Naive thymus-derived CD4-positive, alpha-beta T cell (primary cell): ENCODE measurements at regions of chr1 and their contacts with region 1.

Region 1: GRCh38 chr1:52365746-52366516 is at the start of gene CC2D1B:
- DNase-seq: peak; percentile 97 to 100 (median 99)
- ATAC-seq: peak; percentile 90
- H3K4me3 ChIP-seq: peak within 1 kb of the TSS; percentile 67
- H3K4me3 Mint-ChIP-seq: peak within 1 kb of the TSS; percentile 85 to 98 (median 94)
- H3K27ac ChIP-seq: peak within 1 kb of the TSS; percentile 95
- H3K27ac Mint-ChIP-seq: peak within 1 kb of the TSS; percentile 89 to 97 (median 94)
- H3K4me1 ChIP-seq: peaks cover 15 to 20% of the 10 kb centered on the region in 2 donors
- H3K4me1 Mint-ChIP-seq: peaks cover 26 to 65% (median 51%) of the 10 kb centered on the region in 7 donors
- H3K27me3 ChIP-seq: no peaks in the 10 kb centered on the region
- H3K27me3 Mint-ChIP-seq: no peaks in the 10 kb centered on the region
- total RNA-seq, gene CC2D1B: 44.5 to 91.2 (median 58.3) TPM

Region 2: GRCh38 chr1:51878616-51879336 is 487.2 kb before region 1 on chr1 and contains the start of gene NRDC:
- CTCF ChIA-PET with region 1: no interaction called
- POLR2A ChIA-PET with region 1: interaction called, 5 read pairs
- intact Hi-C with region 1: loop called (anchors 1 kb)
- DNase-seq: peak; percentile 95 to 100 (median 99)
- ATAC-seq: peak; percentile 95
- H3K4me3 ChIP-seq: peak within 1 kb of the TSS; percentile 87
- H3K4me3 Mint-ChIP-seq: no peak within 1 kb of the TSS
- H3K27ac ChIP-seq: peak within 1 kb of the TSS; percentile 98
- H3K27ac Mint-ChIP-seq: no peak within 1 kb of the TSS
- H3K4me1 ChIP-seq: peaks cover 16 to 26% of the 10 kb centered on the region in 2 donors
- H3K4me1 Mint-ChIP-seq: peaks cover 0 to 30% (median 17%) of the 10 kb centered on the region in 7 donors
- H3K27me3 ChIP-seq: no peaks in the 10 kb centered on the region
- H3K27me3 Mint-ChIP-seq: peaks cover 7 to 15% (median 10%) of the 10 kb centered on the region in 5 donors
- total RNA-seq, gene NRDC: 93.1 to 194 (median 122) TPM

Region 3: DNA sequence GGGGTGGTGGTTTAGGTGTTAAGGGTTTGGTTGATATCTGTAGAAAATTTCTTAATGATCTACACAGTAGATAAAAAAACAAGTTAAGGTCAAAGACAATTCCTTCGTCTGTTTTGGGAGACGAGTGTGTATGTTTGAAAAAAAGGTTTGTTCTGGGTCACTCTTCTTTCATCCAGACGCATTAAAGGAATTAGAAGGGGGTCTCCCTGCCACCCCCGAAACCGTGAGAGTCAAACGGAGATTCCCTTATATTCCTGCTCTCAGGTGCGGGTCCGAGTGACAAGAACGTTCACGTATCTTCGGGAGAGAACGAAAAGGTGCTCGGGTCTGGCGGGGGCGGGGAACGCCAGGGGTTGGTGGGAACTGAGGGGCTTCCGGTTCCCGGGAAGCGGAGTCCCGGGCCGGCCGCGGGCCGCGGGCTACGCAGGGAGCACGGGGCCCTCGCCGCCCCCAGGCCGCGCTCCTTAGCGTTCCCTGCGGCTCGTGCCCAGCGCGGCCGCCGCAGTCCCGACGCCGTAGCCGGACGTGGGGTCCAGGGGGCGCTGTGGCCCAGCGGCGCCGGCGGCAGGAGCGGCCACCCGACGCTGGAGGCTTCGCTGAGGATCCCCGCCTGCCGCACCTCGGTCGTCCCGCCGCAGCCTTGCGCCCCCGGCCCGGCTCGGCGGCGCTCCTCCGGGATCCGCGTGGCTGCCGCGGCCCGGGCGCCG is 224.3 kb before region 1 on chr1 and contains the start of gene ZFYVE9:
- CTCF ChIA-PET with region 1: no interaction called
- POLR2A ChIA-PET with region 1: no interaction called
- intact Hi-C with region 1: loop called (anchors 1 to 5 kb)
- DNase-seq: peak; percentile 52 to 80 (median 73)
- ATAC-seq: peak; percentile 93
- H3K4me3 ChIP-seq: peak within 1 kb of the TSS; percentile 65
- H3K4me3 Mint-ChIP-seq: peak within 1 kb of the TSS; percentile 79 to 96 (median 92)
- H3K27ac ChIP-seq: peak within 1 kb of the TSS; percentile 72
- H3K27ac Mint-ChIP-seq: peak within 1 kb of the TSS; percentile 64 to 95 (median 86)
- H3K4me1 ChIP-seq: peaks cover 11 to 24% of the 10 kb centered on the region in 2 donors
- H3K4me1 Mint-ChIP-seq: peaks cover 26 to 48% (median 43%) of the 10 kb centered on the region in 7 donors
- H3K27me3 ChIP-seq: no peaks in the 10 kb centered on the region
- H3K27me3 Mint-ChIP-seq: peaks cover 0 to 44% (median 0%) of the 10 kb centered on the region in 5 donors
- total RNA-seq, gene ZFYVE9: 1.8 to 13.9 (median 7.6) TPM

Region 4: GRCh38 chr1:52601991-52602855 is 236.3 kb after region 1 on chr1 and contains the start of gene GPX7:
- CTCF ChIA-PET with region 1: no interaction called
- POLR2A ChIA-PET with region 1: no interaction called
- intact Hi-C with region 1: loop called in 1 of 2 experiments (anchors 5 kb)
- DNase-seq: peak; percentile 45 to 68 (median 62)
- ATAC-seq: peak; percentile 84
- H3K4me3 ChIP-seq: peak within 1 kb of the TSS; percentile 83
- H3K4me3 Mint-ChIP-seq: peak within 1 kb of the TSS; percentile 91 to 95 (median 92)
- H3K27ac ChIP-seq: peak within 1 kb of the TSS; percentile 82
- H3K27ac Mint-ChIP-seq: peak within 1 kb of the TSS; percentile 85 to 97 (median 95)
- H3K4me1 ChIP-seq: peaks cover 25 to 29% of the 10 kb centered on the region in 2 donors
- H3K4me1 Mint-ChIP-seq: peaks cover 38 to 57% (median 50%) of the 10 kb centered on the region in 7 donors
- H3K27me3 ChIP-seq: no peaks in the 10 kb centered on the region
- H3K27me3 Mint-ChIP-seq: no peaks in the 10 kb centered on the region
- total RNA-seq, gene GPX7: 14.8 to 32.8 (median 29.2) TPM

Region 5: DNA sequence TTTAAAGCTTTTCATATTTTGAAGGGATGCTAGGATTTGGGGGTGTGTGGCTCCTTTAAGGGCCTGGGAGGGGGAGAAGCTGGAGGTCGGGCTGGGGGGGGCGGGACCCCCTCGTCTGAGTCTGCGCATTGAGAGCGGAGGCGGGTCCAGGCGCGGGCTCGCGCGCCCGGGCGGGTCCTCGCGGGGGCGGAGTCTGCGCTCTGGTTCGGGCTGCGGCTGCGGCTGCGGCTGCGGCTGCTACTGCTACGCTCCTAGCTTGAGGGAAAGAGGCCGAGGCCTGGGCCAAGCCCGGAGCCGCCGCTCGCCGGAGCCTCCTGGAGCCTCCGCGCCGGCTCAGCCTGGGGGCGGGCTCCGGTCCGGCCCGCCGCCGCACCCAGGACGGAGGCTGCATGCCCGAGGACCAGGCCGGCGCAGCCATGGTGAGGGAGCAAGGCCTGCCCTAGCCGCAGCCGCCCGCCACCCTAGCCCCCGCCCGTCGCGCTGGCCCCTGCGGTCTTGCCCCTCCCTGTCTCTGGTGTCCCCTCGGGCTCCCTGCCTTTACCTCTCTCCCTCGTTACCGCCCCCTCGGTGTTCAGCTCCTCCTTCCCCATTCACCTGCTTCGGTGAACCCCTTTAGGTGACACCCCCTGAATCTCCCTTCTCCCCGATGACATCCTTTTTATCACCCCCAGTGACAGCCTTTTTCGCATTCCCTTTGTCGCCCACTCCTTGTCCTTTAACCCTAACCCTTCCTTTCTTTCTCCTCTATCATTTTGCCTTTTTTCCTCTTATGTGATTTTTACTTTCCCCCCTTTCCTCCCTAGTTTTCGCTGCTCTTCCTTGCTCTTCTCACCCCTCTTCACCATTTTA is 360.6 kb after region 1 on chr1 and contains the start of gene ZYG11B:
- CTCF ChIA-PET with region 1: interaction called, 6 read pairs
- POLR2A ChIA-PET with region 1: interaction called, 4 read pairs
- intact Hi-C with region 1: loop called (anchors 1 to 2 kb)
- DNase-seq: peak; percentile 80 to 93 (median 88)
- ATAC-seq: peak; percentile 97
- H3K4me3 ChIP-seq: peak within 1 kb of the TSS; percentile 85
- H3K4me3 Mint-ChIP-seq: peak within 1 kb of the TSS; percentile 88 to 99 (median 97)
- H3K27ac ChIP-seq: peak within 1 kb of the TSS; percentile 89
- H3K27ac Mint-ChIP-seq: peak within 1 kb of the TSS; percentile 72 to 97 (median 90)
- H3K4me1 ChIP-seq: peaks cover 12 to 19% of the 10 kb centered on the region in 2 donors
- H3K4me1 Mint-ChIP-seq: peaks cover 24 to 60% (median 54%) of the 10 kb centered on the region in 7 donors
- H3K27me3 ChIP-seq: no peaks in the 10 kb centered on the region
- H3K27me3 Mint-ChIP-seq: peaks cover 0 to 6% (median 0%) of the 10 kb centered on the region in 5 donors
- total RNA-seq, gene ZYG11B: 14.9 to 26.8 (median 17.9) TPM

Region 6: GRCh38 chr1:53220171-53220961 is 854.4 kb after region 1 on chr1 and contains the start of gene CZIB:
- CTCF ChIA-PET with region 1: no interaction called
- POLR2A ChIA-PET with region 1: no interaction called
- intact Hi-C with region 1: loop called in 1 of 2 experiments (anchors 1 kb)
- DNase-seq: peak; percentile 85 to 97 (median 92)
- ATAC-seq: peak; percentile 97
- H3K4me3 ChIP-seq: peak within 1 kb of the TSS; percentile 80
- H3K4me3 Mint-ChIP-seq: peak within 1 kb of the TSS; percentile 83 to 94 (median 92)
- H3K27ac ChIP-seq: peak within 1 kb of the TSS; percentile 99
- H3K27ac Mint-ChIP-seq: peak within 1 kb of the TSS; percentile 91 to 98 (median 96)
- H3K4me1 ChIP-seq: peaks cover 15% of the 10 kb centered on the region in 2 donors
- H3K4me1 Mint-ChIP-seq: peaks cover 15 to 31% (median 26%) of the 10 kb centered on the region in 7 donors
- H3K27me3 ChIP-seq: no peaks in the 10 kb centered on the region
- H3K27me3 Mint-ChIP-seq: no peaks in the 10 kb centered on the region
- total RNA-seq, gene CZIB: 41.9 to 94.9 (median 51.4) TPM